H1 (cell line): ENCODE measurements at regions of chr15 and their contacts with region 1.

Region 1: GRCh38 chr15:90886041-90886614 is 1.8 kb downstream of the FES start:
- DNase-seq: peak in 1 of 2 experiments; percentile 96
- H3K4me3 ChIP-seq: no peak overlapping the region
- H3K27ac ChIP-seq: no peak overlapping the region
- H3K4me1 ChIP-seq: peaks cover 0 to 24% (median 15%) of the 10 kb centered on the region in 4 experiments; a peak in 6 of 7 replicates
- H3K27me3 ChIP-seq: no peaks in the 10 kb centered on the region
- CTCF ChIP-seq: peak in 2 of 3 experiments; percentile 91; a peak in 3 of 4 replicates
- EP300 ChIP-seq: 0 out of 3 replicates have a peak, but pooled peaks of 1 of the 2 experiments have one; percentile 29
- POLR2A ChIP-seq: no peak
- RAD21 ChIP-seq: peak; percentile 99

Region 2: DNA sequence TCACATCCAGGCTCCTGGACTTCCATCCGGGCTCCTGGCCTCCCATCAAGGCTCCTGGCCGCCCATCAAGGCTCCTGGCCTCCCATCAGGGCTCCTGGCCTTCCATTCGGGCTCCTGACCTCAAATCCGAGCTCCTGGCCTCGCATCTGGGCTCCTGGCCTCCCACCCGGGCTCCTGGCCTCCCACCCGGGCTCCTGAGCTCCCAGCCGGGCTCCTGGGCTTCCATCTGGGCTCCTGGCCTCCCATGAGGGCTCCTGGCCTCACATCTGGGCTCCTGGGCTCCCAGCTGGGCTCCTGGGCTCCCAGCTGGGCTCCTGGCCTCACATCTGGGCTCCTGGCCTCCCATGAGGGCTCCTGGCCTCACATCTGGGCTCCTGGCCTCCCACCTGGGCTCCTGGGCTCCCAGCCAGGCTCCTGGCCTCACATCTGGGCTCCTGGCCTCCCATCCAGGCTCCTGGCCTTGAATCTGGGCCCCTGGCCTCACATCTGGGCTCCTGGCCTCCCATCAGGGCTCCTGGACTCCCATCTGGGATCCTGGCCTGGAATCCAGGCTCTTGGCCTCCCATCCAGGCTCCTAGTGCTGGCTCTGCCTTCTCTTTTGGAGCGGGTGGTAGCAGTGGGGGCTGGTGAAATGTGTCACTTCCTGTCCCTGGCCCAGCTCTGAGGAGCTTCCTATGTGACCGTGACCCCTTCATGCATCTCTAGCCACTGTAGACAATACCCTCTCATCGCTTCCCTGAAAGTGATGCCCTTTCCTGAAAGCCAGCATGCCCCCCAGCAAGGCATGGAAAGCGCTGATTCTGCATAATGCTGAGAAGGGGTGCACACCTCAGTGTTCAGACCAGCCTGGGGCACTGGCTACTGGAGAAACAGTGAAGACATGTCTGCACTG is 231.6 kb before region 1 on chr15:
- CTCF ChIA-PET with region 1: interaction called, 19 read pairs
- POLR2A ChIA-PET with region 1: no interaction called
- DNase-seq: no peak
- H3K4me3 ChIP-seq: no peak overlapping the region
- H3K27ac ChIP-seq: no peak overlapping the region
- H3K4me1 ChIP-seq: no peaks in the 10 kb centered on the region
- H3K27me3 ChIP-seq: no peaks in the 10 kb centered on the region; a peak in 2 of 7 replicates
- CTCF ChIP-seq: no peak
- EP300 ChIP-seq: no peak
- POLR2A ChIP-seq: no peak
- RAD21 ChIP-seq: no peak

Region 3: DNA sequence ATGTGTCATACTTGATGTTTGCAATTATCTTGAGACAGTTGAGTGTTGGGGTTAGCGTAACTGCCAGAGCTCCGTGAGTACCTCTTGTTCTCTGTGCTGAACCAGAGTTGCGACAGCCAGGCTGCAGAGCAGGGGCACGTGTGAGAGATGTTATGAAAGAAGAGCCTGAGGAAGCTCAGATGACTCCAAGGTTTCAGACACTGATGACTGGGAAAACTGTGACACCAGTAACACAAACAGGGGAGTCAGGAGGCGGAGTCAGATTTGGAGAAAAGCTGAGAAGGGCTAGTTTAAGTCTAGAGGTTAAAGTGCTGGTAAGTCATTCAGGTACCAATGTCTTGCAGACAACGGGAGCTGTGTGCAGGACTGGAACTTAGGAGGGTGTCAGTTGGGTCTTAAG is 124.0 kb before region 1 on chr15:
- CTCF ChIA-PET with region 1: interaction called, 20 read pairs
- POLR2A ChIA-PET with region 1: no interaction called
- DNase-seq: no peak
- H3K4me3 ChIP-seq: peak overlapping the region in 1 of 4 experiments; percentile 19; a peak in 1 of 8 replicates
- H3K27ac ChIP-seq: no peak overlapping the region
- H3K4me1 ChIP-seq: peaks cover 0 to 4% (median 4%) of the 10 kb centered on the region in 4 experiments; a peak in 3 of 7 replicates
- H3K27me3 ChIP-seq: no peaks in the 10 kb centered on the region
- CTCF ChIP-seq: no peak
- EP300 ChIP-seq: no peak
- POLR2A ChIP-seq: no peak
- RAD21 ChIP-seq: no peak

Region 4: GRCh38 chr15:90818251-90819210 is 67.6 kb before region 1 on chr15:
- CTCF ChIA-PET with region 1: interaction called, 132 read pairs
- POLR2A ChIA-PET with region 1: interaction called, 11 read pairs
- DNase-seq: peak in 1 of 2 experiments; percentile 53
- H3K4me3 ChIP-seq: no peak overlapping the region
- H3K27ac ChIP-seq: no peak overlapping the region
- H3K4me1 ChIP-seq: peaks cover 9 to 20% (median 17%) of the 10 kb centered on the region in 4 experiments
- H3K27me3 ChIP-seq: no peaks in the 10 kb centered on the region
- CTCF ChIP-seq: peak; percentile 59 to 65 (median 63)
- EP300 ChIP-seq: no peak
- POLR2A ChIP-seq: no peak
- RAD21 ChIP-seq: peak; percentile 59 to 73

Region 5: GRCh38 chr15:90845201-90845949 is 40.8 kb before region 1 on chr15:
- CTCF ChIA-PET with region 1: interaction called, 20 read pairs
- POLR2A ChIA-PET with region 1: no interaction called
- DNase-seq: no peak
- H3K4me3 ChIP-seq: no peak overlapping the region
- H3K27ac ChIP-seq: no peak overlapping the region
- H3K4me1 ChIP-seq: peaks cover 3 to 6% (median 3%) of the 10 kb centered on the region in 4 experiments; a peak in 4 of 7 replicates
- H3K27me3 ChIP-seq: no peaks in the 10 kb centered on the region
- CTCF ChIP-seq: no peak
- EP300 ChIP-seq: no peak
- POLR2A ChIP-seq: no peak
- RAD21 ChIP-seq: no peak

Region 6: GRCh38 chr15:90902040-90902839 is 16.1 kb after region 1 on chr15:
- CTCF ChIA-PET with region 1: interaction called, 125 read pairs
- POLR2A ChIA-PET with region 1: interaction called, 4 read pairs
- DNase-seq: peak in 1 of 2 experiments; percentile 86
- H3K4me3 ChIP-seq: peak overlapping the region; percentile 52 to 77 (median 73)
- H3K27ac ChIP-seq: no peak overlapping the region
- H3K4me1 ChIP-seq: peaks cover 5 to 8% (median 7%) of the 10 kb centered on the region in 4 experiments; a peak in 6 of 7 replicates
- H3K27me3 ChIP-seq: peaks cover 0 to 16% (median 9%) of the 10 kb centered on the region in 4 experiments; a peak in 5 of 7 replicates
- CTCF ChIP-seq: peak; percentile 53 to 85 (median 81)
- EP300 ChIP-seq: no peak
- POLR2A ChIP-seq: no peak
- RAD21 ChIP-seq: no peak; a peak in 1 of 4 replicates